A673 (cell line): ENCODE measurements at regions of chr12 and their contacts with region 1.

Region 1: GRCh38 chr12:24960222-24960855 is 11.4 kb upstream of the BCAT1 start:
- DNase-seq: peak; percentile 73
- H3K4me3 ChIP-seq: no peak overlapping the region
- H3K27ac ChIP-seq: no peak overlapping the region
- H3K4me1 ChIP-seq: no peaks in the 10 kb centered on the region
- H3K27me3 ChIP-seq: no peaks in the 10 kb centered on the region
- CTCF ChIP-seq: peak; percentile 79

Region 2: DNA sequence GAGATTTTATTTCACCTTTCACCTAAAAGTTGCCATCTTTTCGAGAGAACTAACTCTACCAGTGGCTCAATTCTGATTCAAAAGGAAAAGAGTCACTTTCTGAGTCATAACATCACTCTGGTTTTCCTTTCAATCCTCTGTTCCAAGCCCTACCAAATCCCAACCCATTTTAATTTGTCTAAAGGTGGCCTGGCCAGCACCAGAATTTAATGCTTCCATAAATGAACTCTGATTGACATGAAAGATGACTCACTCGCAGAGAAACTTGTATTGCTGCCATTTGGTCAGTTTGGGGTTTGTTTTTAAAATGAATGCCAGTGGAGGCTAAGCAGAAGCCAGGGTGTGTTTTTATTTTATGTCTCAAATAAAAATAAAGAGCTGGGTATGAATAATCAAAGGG is 893.5 kb before region 1 on chr12:
- CTCF ChIA-PET with region 1: no interaction called
- POLR2A ChIA-PET with region 1: no interaction called
- intact Hi-C with region 1: no loop called
- DNase-seq: peak; percentile 16
- H3K4me3 ChIP-seq: no peak overlapping the region
- H3K27ac ChIP-seq: no peak overlapping the region
- H3K4me1 ChIP-seq: peaks cover 51% of the 10 kb centered on the region
- H3K27me3 ChIP-seq: no peaks in the 10 kb centered on the region
- CTCF ChIP-seq: no peak

Region 3: GRCh38 chr12:25115677-25116076 is 155.3 kb after region 1 on chr12:
- CTCF ChIA-PET with region 1: no interaction called
- POLR2A ChIA-PET with region 1: interaction called, 10 read pairs
- intact Hi-C with region 1: no loop called
- DNase-seq: no peak
- H3K4me3 ChIP-seq: no peak overlapping the region
- H3K27ac ChIP-seq: no peak overlapping the region
- H3K4me1 ChIP-seq: no peaks in the 10 kb centered on the region
- H3K27me3 ChIP-seq: no peaks in the 10 kb centered on the region
- CTCF ChIP-seq: no peak